H1 (cell line): ENCODE measurements at regions of chr11 and their contacts with region 1.

Region 1: GRCh38 chr11:16881074-16881709 is 133.0 kb downstream of the PLEKHA7 start:
- DNase-seq: no peak
- H3K4me3 ChIP-seq: no peak overlapping the region
- H3K27ac ChIP-seq: no peak overlapping the region
- H3K4me1 ChIP-seq: peaks cover 2 to 9% (median 6%) of the 10 kb centered on the region in 4 experiments; a peak in 4 of 7 replicates
- H3K27me3 ChIP-seq: no peaks in the 10 kb centered on the region
- CTCF ChIP-seq: peak; percentile 37 to 41 (median 40)
- EP300 ChIP-seq: no peak
- POLR2A ChIP-seq: no peak
- RAD21 ChIP-seq: peak; percentile 41 to 46; a peak in 3 of 4 replicates

Region 2: DNA sequence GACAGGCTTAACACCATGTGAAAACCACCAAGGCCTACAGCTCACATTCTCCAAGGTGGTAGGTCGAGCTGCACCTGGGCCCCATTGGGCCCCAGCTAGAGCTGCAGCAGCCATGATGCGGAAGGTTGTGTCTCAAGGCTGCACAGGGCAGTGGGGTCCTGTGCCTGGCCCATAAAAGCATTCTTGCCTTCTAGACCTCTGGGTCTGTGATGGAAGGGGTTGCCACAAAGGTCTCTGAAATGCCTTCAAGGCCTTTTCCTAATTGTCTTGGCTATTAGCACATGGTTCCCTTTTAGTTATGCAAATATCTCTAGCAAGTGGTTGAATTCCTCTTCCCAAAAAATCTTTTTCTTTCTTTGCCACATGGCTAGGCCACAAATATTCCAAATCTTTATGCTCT is 195.3 kb before region 1 on chr11:
- CTCF ChIA-PET with region 1: no interaction called
- POLR2A ChIA-PET with region 1: no interaction called
- DNase-seq: no peak
- H3K4me3 ChIP-seq: no peak overlapping the region
- H3K27ac ChIP-seq: no peak overlapping the region
- H3K4me1 ChIP-seq: peaks cover 0 to 5% (median 3%) of the 10 kb centered on the region in 4 experiments; a peak in 4 of 7 replicates
- H3K27me3 ChIP-seq: no peaks in the 10 kb centered on the region; a peak in 1 of 7 replicates
- CTCF ChIP-seq: no peak
- EP300 ChIP-seq: no peak
- POLR2A ChIP-seq: no peak
- RAD21 ChIP-seq: no peak

Region 3: DNA sequence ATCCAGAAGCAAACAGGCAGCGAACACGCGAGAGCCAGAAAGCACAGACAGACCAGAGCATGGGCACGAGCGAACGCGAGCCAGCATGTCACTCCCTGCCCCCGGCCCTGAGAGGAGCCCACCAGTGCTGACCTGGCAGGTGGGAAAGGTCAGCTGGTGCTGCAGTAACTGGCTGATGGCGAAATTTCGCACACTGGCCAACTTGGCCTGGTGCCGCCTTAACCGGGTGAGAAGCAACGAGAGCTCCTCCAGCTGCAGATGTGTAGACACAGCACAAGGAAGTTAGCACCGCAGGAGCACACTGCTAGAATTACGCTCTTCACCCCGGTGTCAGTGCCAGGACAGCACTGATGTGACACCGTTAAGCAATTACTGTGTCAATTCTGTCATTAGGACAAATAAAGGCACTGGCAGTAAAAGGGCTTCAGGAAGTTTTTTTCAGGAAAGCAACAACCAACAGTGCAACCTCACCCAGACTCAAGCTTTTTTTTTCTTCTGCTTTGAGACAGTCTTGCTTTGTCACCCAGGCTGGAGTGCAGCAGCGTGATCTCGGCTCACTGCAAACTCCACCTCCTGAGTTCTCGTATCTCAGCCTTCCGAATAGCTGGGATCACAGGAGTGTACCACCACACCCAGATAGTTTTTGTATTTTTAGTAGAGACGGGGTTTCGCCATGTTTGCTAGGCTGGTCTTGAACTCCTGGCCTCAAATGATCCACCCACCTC is 66.0 kb before region 1 on chr11:
- CTCF ChIA-PET with region 1: interaction called, 46 read pairs
- POLR2A ChIA-PET with region 1: no interaction called
- DNase-seq: no peak
- H3K4me3 ChIP-seq: no peak overlapping the region
- H3K27ac ChIP-seq: no peak overlapping the region; the same call in 1 of the 2 replicates
- H3K4me1 ChIP-seq: peaks cover 0 to 2% (median under 1%) of the 10 kb centered on the region in 4 experiments; a peak in 1 of 7 replicates
- H3K27me3 ChIP-seq: no peaks in the 10 kb centered on the region
- CTCF ChIP-seq: no peak
- EP300 ChIP-seq: no peak
- POLR2A ChIP-seq: no peak
- RAD21 ChIP-seq: no peak

Region 4: GRCh38 chr11:16820324-16821092 is 60.7 kb before region 1 on chr11:
- CTCF ChIA-PET with region 1: interaction called, 46 read pairs
- POLR2A ChIA-PET with region 1: no interaction called
- DNase-seq: peak; percentile 66 to 91
- H3K4me3 ChIP-seq: no peak overlapping the region
- H3K27ac ChIP-seq: no peak overlapping the region
- H3K4me1 ChIP-seq: peaks cover 4 to 7% (median 5%) of the 10 kb centered on the region in 4 experiments; a peak in 5 of 7 replicates
- H3K27me3 ChIP-seq: no peaks in the 10 kb centered on the region
- CTCF ChIP-seq: peak; percentile 82 to 93 (median 85)
- EP300 ChIP-seq: no peak
- POLR2A ChIP-seq: no peak
- RAD21 ChIP-seq: peak; percentile 84 to 87

Region 5: DNA sequence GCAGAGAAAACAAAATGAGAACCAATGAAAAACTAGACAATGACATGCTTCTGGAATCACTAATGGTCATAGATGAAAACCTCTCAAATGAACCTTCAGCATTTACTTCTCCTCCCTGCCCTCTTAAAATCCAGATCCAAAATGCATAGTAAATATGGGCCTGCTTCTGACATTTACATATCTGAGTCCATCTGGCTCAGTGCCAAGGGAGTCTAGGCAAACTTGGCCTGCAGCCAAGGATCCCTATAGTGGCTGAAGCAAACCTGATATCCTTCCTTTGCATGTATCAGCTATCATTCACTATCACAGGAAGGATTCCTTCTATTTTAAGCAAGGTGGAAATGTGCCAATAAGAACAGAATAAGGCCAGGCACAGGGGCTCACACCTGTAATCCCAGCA is 37.9 kb before region 1 on chr11:
- CTCF ChIA-PET with region 1: interaction called, 10 read pairs
- POLR2A ChIA-PET with region 1: no interaction called
- DNase-seq: no peak
- H3K4me3 ChIP-seq: no peak overlapping the region
- H3K27ac ChIP-seq: no peak overlapping the region
- H3K4me1 ChIP-seq: no peaks in the 10 kb centered on the region
- H3K27me3 ChIP-seq: no peaks in the 10 kb centered on the region
- CTCF ChIP-seq: no peak
- EP300 ChIP-seq: no peak
- POLR2A ChIP-seq: no peak
- RAD21 ChIP-seq: no peak

Region 6: GRCh38 chr11:16862746-16863145 is 18.4 kb before region 1 on chr11:
- CTCF ChIA-PET with region 1: interaction called, 15 read pairs
- POLR2A ChIA-PET with region 1: no interaction called
- DNase-seq: no peak
- H3K4me3 ChIP-seq: no peak overlapping the region
- H3K27ac ChIP-seq: no peak overlapping the region
- H3K4me1 ChIP-seq: peaks cover 0 to 2% (median 0%) of the 10 kb centered on the region in 4 experiments; a peak in 1 of 7 replicates
- H3K27me3 ChIP-seq: no peaks in the 10 kb centered on the region
- CTCF ChIP-seq: no peak
- EP300 ChIP-seq: no peak
- POLR2A ChIP-seq: no peak
- RAD21 ChIP-seq: no peak

Region 7: GRCh38 chr11:16897470-16898061 is 16.4 kb after region 1 on chr11:
- CTCF ChIA-PET with region 1: interaction called, 15 read pairs
- POLR2A ChIA-PET with region 1: interaction called, 3 read pairs
- DNase-seq: peak; percentile 67 to 70
- H3K4me3 ChIP-seq: peak overlapping the region in 3 of 4 experiments; percentile 7 to 50 (median 14); a peak in 4 of 8 replicates
- H3K27ac ChIP-seq: no peak overlapping the region
- H3K4me1 ChIP-seq: peaks cover 8 to 30% (median 27%) of the 10 kb centered on the region in 4 experiments; a peak in 6 of 7 replicates
- H3K27me3 ChIP-seq: no peaks in the 10 kb centered on the region; a peak in 1 of 7 replicates
- CTCF ChIP-seq: no peak
- EP300 ChIP-seq: peak in 1 of 2 experiments; percentile 72; a peak in 1 of 3 replicates
- POLR2A ChIP-seq: no peak
- RAD21 ChIP-seq: no peak

Region 8: GRCh38 chr11:16986434-16987215 is 105.4 kb after region 1 on chr11:
- CTCF ChIA-PET with region 1: no interaction called
- POLR2A ChIA-PET with region 1: no interaction called
- DNase-seq: no peak
- H3K4me3 ChIP-seq: no peak overlapping the region
- H3K27ac ChIP-seq: no peak overlapping the region
- H3K4me1 ChIP-seq: peaks cover 18 to 30% (median 23%) of the 10 kb centered on the region in 4 experiments
- H3K27me3 ChIP-seq: no peaks in the 10 kb centered on the region
- CTCF ChIP-seq: no peak
- EP300 ChIP-seq: no peak
- POLR2A ChIP-seq: no peak
- RAD21 ChIP-seq: no peak